Panc1 (cell line): ENCODE measurements at regions of chr11 and their contacts with region 1.

Region 1: GRCh38 chr11:106424111-106424510 is 346.6 kb downstream of the AASDHPPT start:
- DNase-seq: no peak
- ATAC-seq: no peak
- H3K4me3 ChIP-seq: no peak overlapping the region
- H3K27ac ChIP-seq: no peak overlapping the region
- H3K4me1 ChIP-seq: no peaks in the 10 kb centered on the region
- H3K27me3 ChIP-seq: no peaks in the 10 kb centered on the region
- CTCF ChIP-seq: no peak

Region 2: DNA sequence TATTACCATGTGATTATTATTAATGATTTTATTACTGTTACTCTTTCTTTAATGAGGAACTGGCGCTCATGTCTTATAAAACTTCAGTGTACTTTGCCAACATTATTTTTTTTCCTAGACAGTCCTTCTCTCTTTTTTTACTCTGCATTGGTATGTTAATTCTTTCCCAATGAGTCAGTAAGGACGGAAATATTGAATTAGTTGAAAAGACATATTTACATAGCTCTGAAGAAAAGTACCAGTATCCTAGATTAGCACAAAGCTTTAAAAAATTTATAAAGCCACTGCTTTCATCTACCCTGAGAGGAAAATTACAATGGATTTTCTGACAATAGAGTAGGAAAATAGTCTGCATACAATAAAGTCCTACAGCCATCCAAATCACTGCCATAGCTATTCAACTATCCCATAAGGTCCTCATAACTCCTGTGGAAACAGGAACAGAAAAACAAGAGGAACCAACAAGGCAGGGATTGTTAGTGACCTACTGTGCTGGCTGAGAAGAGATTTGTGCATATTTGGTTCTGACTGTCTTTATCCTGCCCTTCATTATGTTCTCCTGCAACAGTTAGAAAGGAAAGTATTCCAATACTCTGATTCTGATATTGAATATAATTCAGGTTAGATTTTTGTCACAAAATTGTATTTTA is 32.2 kb before region 1 on chr11:
- CTCF ChIA-PET with region 1: no interaction called
- POLR2A ChIA-PET with region 1: interaction called, 13 read pairs
- in situ Hi-C with region 1: no loop called
- intact Hi-C with region 1: no loop called
- DNase-seq: no peak
- ATAC-seq: no peak
- H3K4me3 ChIP-seq: no peak overlapping the region
- H3K27ac ChIP-seq: peak overlapping the region; percentile 8; the same call in 1 of the 2 replicates
- H3K4me1 ChIP-seq: no peaks in the 10 kb centered on the region
- H3K27me3 ChIP-seq: no peaks in the 10 kb centered on the region
- CTCF ChIP-seq: no peak